ENCODE measurements at regions of chr19 and their contacts with region 1.

Region 1: DNA sequence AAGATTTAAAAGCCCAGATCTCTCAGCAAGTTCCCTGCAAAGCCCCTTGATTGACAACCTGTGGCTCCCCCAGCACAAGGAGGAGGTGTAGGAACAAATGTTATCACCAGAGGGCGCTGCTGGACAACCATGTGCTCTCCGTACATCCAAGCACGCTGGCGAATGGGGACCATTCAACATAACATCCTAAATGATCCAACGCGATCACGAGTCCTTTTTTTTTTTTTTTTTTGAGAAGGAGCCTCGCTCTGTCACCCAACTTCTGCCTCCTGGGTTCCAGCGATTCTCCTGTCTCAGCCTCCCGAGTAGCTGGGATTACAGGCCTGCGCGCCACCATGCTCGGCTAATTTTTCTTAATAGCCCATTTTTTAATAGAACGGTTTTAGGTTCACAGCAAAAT is 52.0 kb downstream of the NWD1 start:
- DNase-seq: peak; percentile 97
- H3K4me3 ChIP-seq: no peak overlapping the region
- H3K27ac ChIP-seq: no peak overlapping the region
- H3K4me1 ChIP-seq: peaks cover 0 to 3% (median 0%) of the 10 kb centered on the region in 4 donors
- H3K27me3 ChIP-seq: no peaks in the 10 kb centered on the region
- CTCF ChIP-seq: peak; percentile 82 to 88 (median 86)
- EP300 ChIP-seq: no peak
- POLR2A ChIP-seq: no peak

Region 2: GRCh38 chr19:16572332-16573211 is 199.0 kb before region 1 on chr19 and contains the start of gene SLC35E1:
- intact Hi-C with region 1: no loop called
- DNase-seq: peak; percentile 99
- H3K4me3 ChIP-seq: peak within 1 kb of the TSS; percentile 68 to 97 (median 72)
- H3K27ac ChIP-seq: peak within 1 kb of the TSS; percentile 78 to 91 (median 86)
- H3K4me1 ChIP-seq: peaks cover 29 to 79% (median 48%) of the 10 kb centered on the region in 4 donors
- H3K27me3 ChIP-seq: no peaks in the 10 kb centered on the region
- CTCF ChIP-seq: no peak
- EP300 ChIP-seq: no peak
- POLR2A ChIP-seq: peak; percentile 51
- total RNA-seq, gene SLC35E1: 22.8 to 39.7 (median 34.0) TPM

Region 3: DNA sequence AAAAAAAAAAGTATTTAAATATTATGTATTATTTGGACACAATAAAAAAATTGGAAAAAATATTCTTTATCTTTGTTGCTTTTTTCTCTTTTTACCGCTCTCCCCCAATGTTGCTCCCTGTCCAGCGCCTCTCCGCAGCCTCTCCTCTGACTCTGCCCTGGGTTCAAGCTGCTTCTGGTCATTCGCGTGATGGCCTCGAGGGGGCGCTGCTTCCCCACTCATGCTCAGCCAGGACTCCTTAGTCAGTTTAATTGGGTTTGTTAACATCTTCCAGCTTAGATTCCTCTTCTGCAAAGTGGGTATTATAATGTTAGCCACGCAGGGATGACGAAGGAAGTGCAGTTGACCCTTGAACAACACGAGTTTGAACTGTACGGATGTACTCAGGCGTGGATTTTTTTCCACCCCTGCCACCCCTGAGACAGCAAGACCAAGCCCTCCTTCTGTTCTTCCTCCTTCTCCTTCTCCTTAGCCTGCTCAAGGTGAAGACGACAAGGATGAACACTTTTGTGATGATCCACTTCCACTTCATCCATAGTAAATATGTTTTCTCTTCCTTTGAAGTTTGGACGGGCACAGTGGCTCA is 56.8 kb before region 1 on chr19:
- intact Hi-C with region 1: loop called (anchors 5 kb)
- DNase-seq: no peak
- H3K4me3 ChIP-seq: no peak overlapping the region
- H3K27ac ChIP-seq: no peak overlapping the region
- H3K4me1 ChIP-seq: peaks cover 0 to 10% (median 7%) of the 10 kb centered on the region in 4 donors
- H3K27me3 ChIP-seq: no peaks in the 10 kb centered on the region
- CTCF ChIP-seq: peak; percentile 72 to 86 (median 79)
- EP300 ChIP-seq: no peak
- POLR2A ChIP-seq: no peak

Region 4: GRCh38 chr19:16829010-16829821 is 57.6 kb after region 1 on chr19 and contains the start of gene SIN3B:
- intact Hi-C with region 1: loop called (anchors 5 kb)
- DNase-seq: peak; percentile 95
- H3K4me3 ChIP-seq: peak within 1 kb of the TSS; percentile 88 to 96 (median 94)
- H3K27ac ChIP-seq: peak within 1 kb of the TSS; percentile 81 to 89 (median 87)
- H3K4me1 ChIP-seq: peaks cover 29 to 51% (median 40%) of the 10 kb centered on the region in 4 donors
- H3K27me3 ChIP-seq: no peaks in the 10 kb centered on the region
- CTCF ChIP-seq: peak in 1 of 3 experiments; percentile 16
- EP300 ChIP-seq: no peak
- POLR2A ChIP-seq: peak; percentile 19
- total RNA-seq, gene SIN3B: 25.3 to 53.9 (median 36.1) TPM

Region 5: DNA sequence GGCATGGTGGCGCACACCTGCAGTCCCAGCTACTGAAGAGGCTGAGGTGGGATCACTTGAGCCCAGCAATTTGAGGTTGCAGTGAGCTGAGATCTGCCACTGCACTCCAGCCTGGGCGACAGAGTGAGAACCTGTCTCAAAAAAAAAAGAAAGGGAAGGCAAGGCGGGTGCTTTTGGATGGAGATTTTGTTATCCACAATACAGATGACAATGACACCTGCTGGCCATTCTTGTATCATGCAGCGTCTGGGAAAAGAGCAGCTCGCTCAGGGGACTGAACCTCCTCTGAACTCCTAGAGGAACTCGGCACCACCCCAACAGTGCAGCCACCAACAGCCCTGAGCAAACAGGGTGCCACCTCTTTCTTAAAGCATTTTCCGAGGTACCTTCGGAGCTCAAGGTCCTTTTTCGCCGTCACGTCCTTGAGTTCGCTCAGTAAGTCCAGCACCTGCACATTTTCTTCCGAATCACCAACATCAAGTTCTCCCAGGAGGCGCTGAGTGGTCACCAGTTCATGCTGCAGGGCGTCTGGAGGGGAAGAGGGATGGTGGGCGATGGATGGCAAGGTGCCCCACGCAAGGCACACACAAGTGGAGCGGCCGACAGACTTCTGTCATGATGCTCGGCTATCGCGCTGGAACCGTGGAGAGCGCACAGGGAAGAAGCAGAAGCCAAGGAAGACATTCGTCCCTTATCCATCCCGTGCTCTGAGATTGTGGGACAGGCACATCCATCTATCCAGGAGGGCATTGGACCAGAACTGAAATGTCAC is 281.0 kb after region 1 on chr19:
- intact Hi-C with region 1: loop called (anchors 2 kb)
- DNase-seq: no peak
- H3K4me3 ChIP-seq: no peak overlapping the region
- H3K27ac ChIP-seq: no peak overlapping the region
- H3K4me1 ChIP-seq: no peaks in the 10 kb centered on the region
- H3K27me3 ChIP-seq: no peaks in the 10 kb centered on the region
- CTCF ChIP-seq: peak; percentile 51 to 63 (median 55)
- EP300 ChIP-seq: no peak
- POLR2A ChIP-seq: no peak